B cell (primary cell): ENCODE measurements at regions of chr12 and their contacts with region 1.

Region 1: GRCh38 chr12:119667577-119668323 is at the start of gene PRKAB1:
- DNase-seq: peak; percentile 99
- ATAC-seq: peak; percentile 94
- H3K4me3 ChIP-seq: peak within 1 kb of the TSS; percentile 80 to 95 (median 89)
- H3K4me3 Mint-ChIP-seq: peak within 1 kb of the TSS; percentile 87
- H3K27ac ChIP-seq: peak within 1 kb of the TSS; percentile 80 to 92
- H3K27ac Mint-ChIP-seq: peak within 1 kb of the TSS; percentile 92
- H3K4me1 ChIP-seq: peaks cover 28 to 36% of the 10 kb centered on the region in 2 donors
- H3K4me1 Mint-ChIP-seq: peaks cover 51% of the 10 kb centered on the region
- H3K27me3 ChIP-seq: no peaks in the 10 kb centered on the region
- H3K27me3 Mint-ChIP-seq: no peaks in the 10 kb centered on the region
- CTCF ChIP-seq: peak; percentile 95
- total RNA-seq, gene PRKAB1: 56.4 and 59.6 TPM in 2 replicates

Region 2: GRCh38 chr12:118016424-118017264 is 1651.1 kb before region 1 on chr12 and contains the start of gene RFC5:
- CTCF ChIA-PET with region 1: no interaction called
- POLR2A ChIA-PET with region 1: no interaction called
- intact Hi-C with region 1: loop called (anchors 2 kb)
- DNase-seq: peak; percentile 98
- ATAC-seq: peak; percentile 98
- H3K4me3 ChIP-seq: peak within 1 kb of the TSS; percentile 51 to 92 (median 81)
- H3K4me3 Mint-ChIP-seq: peak within 1 kb of the TSS; percentile 91
- H3K27ac ChIP-seq: peak within 1 kb of the TSS in 1 of 2 donors; percentile 71
- H3K27ac Mint-ChIP-seq: peak within 1 kb of the TSS; percentile 95
- H3K4me1 ChIP-seq: peaks cover 11 to 16% of the 10 kb centered on the region in 2 donors
- H3K4me1 Mint-ChIP-seq: peaks cover 16% of the 10 kb centered on the region
- H3K27me3 ChIP-seq: no peaks in the 10 kb centered on the region
- H3K27me3 Mint-ChIP-seq: no peaks in the 10 kb centered on the region
- CTCF ChIP-seq: no peak
- total RNA-seq, gene RFC5: 15.0 and 22.7 TPM in 2 replicates

Region 3: GRCh38 chr12:118135788-118136558 is 1531.8 kb before region 1 on chr12 and contains the start of gene PEBP1:
- CTCF ChIA-PET with region 1: no interaction called
- POLR2A ChIA-PET with region 1: no interaction called
- intact Hi-C with region 1: loop called (anchors 5 kb)
- DNase-seq: peak; percentile 91
- ATAC-seq: peak; percentile 100
- H3K4me3 ChIP-seq: peak within 1 kb of the TSS; percentile 66 to 91 (median 73)
- H3K4me3 Mint-ChIP-seq: peak within 1 kb of the TSS; percentile 99
- H3K27ac ChIP-seq: peak within 1 kb of the TSS; percentile 26 to 77
- H3K27ac Mint-ChIP-seq: peak within 1 kb of the TSS; percentile 92
- H3K4me1 ChIP-seq: peaks cover 6 to 19% of the 10 kb centered on the region in 2 donors
- H3K4me1 Mint-ChIP-seq: peaks cover 28% of the 10 kb centered on the region
- H3K27me3 ChIP-seq: no peaks in the 10 kb centered on the region
- H3K27me3 Mint-ChIP-seq: no peaks in the 10 kb centered on the region
- CTCF ChIP-seq: no peak
- total RNA-seq, gene PEBP1: 94.0 and 106 TPM in 2 replicates

Region 4: DNA sequence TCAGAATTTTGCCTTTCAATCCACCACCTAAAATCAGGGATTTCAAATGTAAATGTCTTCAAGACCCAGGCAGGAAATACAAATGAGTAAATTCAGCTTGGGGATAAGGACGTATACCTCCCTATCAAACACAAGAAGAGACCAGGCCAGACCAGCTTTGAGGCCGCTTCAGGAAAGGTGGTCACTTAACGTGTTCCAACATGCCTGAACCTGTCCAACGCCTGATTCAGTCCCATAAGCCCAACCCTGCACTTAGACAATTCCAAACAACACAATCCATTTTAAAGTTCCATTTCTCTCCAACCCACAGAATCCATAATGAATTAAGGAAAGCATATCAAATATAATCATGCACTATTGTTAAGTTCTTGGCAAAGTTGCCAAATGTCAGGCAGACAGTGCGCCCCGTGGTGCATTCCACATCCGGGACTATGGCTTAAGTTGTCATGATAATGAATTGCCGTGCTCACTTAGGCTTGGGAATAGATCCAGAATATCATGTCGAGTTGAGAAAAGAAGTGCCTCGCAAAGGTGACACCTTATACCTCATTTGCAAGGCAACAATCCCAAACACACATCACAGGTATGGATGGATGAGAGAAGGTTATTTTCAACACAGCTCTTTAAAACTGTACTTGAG is 297.7 kb before region 1 on chr12:
- CTCF ChIA-PET with region 1: no interaction called
- POLR2A ChIA-PET with region 1: interaction called, 20 read pairs
- intact Hi-C with region 1: no loop called
- DNase-seq: no peak
- ATAC-seq: no peak
- H3K4me3 ChIP-seq: no peak overlapping the region
- H3K4me3 Mint-ChIP-seq: no peak overlapping the region
- H3K27ac ChIP-seq: no peak overlapping the region
- H3K27ac Mint-ChIP-seq: no peak overlapping the region
- H3K4me1 ChIP-seq: no peaks in the 10 kb centered on the region
- H3K4me1 Mint-ChIP-seq: peaks cover 3% of the 10 kb centered on the region
- H3K27me3 ChIP-seq: peaks cover 0 to 5% (median 0%) of the 10 kb centered on the region in 4 experiments
- H3K27me3 Mint-ChIP-seq: peaks cover 12% of the 10 kb centered on the region
- CTCF ChIP-seq: no peak

Region 5: DNA sequence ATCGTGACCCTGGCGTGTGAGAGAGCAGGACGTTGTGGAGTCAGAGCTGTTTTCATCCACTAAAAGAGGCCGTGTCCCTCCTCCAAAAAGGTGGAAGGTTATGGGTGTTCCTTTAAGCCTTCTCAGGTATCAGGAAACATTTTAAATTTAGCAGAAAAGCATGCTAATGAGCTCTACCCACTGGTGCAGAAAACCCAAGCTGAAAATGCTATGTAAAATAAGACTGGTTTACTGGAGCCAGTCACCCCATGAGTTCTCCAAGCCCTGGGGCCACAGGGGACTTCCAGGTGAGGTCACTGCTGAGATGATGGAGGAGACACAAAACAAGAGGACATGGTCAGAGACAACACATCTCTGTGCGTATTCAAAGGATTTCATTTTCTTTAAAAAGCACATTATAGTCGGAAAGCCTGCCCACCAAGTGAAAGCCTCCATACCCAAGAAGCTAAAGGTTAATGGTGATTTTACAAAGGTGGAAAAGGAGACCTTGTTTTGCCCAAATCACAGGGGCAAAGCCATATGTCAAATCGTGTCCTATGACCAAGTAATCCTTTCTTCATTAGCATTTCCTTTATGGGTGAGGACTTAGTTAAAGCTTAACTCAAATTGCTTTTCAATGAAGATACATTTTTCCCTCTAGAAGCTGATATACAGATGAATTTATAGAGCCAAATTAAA is 14.3 kb after region 1 on chr12:
- CTCF ChIA-PET with region 1: interaction called, 22 read pairs
- POLR2A ChIA-PET with region 1: interaction called, 6 read pairs
- intact Hi-C with region 1: loop called (anchors 1 kb)
- DNase-seq: peak; percentile 56
- ATAC-seq: peak; percentile 60
- H3K4me3 ChIP-seq: peak overlapping the region in 3 of 5 experiments; percentile 19 to 43 (median 42)
- H3K4me3 Mint-ChIP-seq: peak overlapping the region; percentile 80
- H3K27ac ChIP-seq: peak overlapping the region; percentile 85 to 94
- H3K27ac Mint-ChIP-seq: peak overlapping the region; percentile 95
- H3K4me1 ChIP-seq: peaks cover 19 to 29% of the 10 kb centered on the region in 2 donors
- H3K4me1 Mint-ChIP-seq: peaks cover 39% of the 10 kb centered on the region
- H3K27me3 ChIP-seq: no peaks in the 10 kb centered on the region
- H3K27me3 Mint-ChIP-seq: no peaks in the 10 kb centered on the region
- CTCF ChIP-seq: no peak

Region 6: GRCh38 chr12:119808441-119808840 is 140.7 kb after region 1 on chr12:
- CTCF ChIA-PET with region 1: no interaction called
- POLR2A ChIA-PET with region 1: no interaction called
- intact Hi-C with region 1: no loop called
- DNase-seq: no peak
- ATAC-seq: no peak
- H3K4me3 ChIP-seq: no peak overlapping the region
- H3K4me3 Mint-ChIP-seq: no peak overlapping the region
- H3K27ac ChIP-seq: no peak overlapping the region
- H3K27ac Mint-ChIP-seq: no peak overlapping the region
- H3K4me1 ChIP-seq: no peaks in the 10 kb centered on the region
- H3K4me1 Mint-ChIP-seq: peaks cover 3% of the 10 kb centered on the region
- H3K27me3 ChIP-seq: no peaks in the 10 kb centered on the region
- H3K27me3 Mint-ChIP-seq: no peaks in the 10 kb centered on the region
- CTCF ChIP-seq: no peak

Region 7: GRCh38 chr12:119876761-119877638 is 209.2 kb after region 1 on chr12 and contains the start of gene CIT:
- CTCF ChIA-PET with region 1: no interaction called
- POLR2A ChIA-PET with region 1: no interaction called
- intact Hi-C with region 1: loop called (anchors 1 kb)
- DNase-seq: peak; percentile 87
- ATAC-seq: peak; percentile 99
- H3K4me3 ChIP-seq: peak within 1 kb of the TSS; percentile 47 to 90 (median 87)
- H3K4me3 Mint-ChIP-seq: peak within 1 kb of the TSS; percentile 84
- H3K27ac ChIP-seq: peak within 1 kb of the TSS in 1 of 2 donors; percentile 54
- H3K27ac Mint-ChIP-seq: peak within 1 kb of the TSS; percentile 28
- H3K4me1 ChIP-seq: peaks cover 0 to 11% of the 10 kb centered on the region in 2 donors
- H3K4me1 Mint-ChIP-seq: peaks cover 13% of the 10 kb centered on the region
- H3K27me3 ChIP-seq: no peaks in the 10 kb centered on the region
- H3K27me3 Mint-ChIP-seq: peaks cover 9% of the 10 kb centered on the region
- CTCF ChIP-seq: no peak
- total RNA-seq, gene CIT: 6.1 and 6.2 TPM in 2 replicates

Region 8: GRCh38 chr12:119988782-119989668 is 321.3 kb after region 1 on chr12 and contains the start of gene BICDL1:
- CTCF ChIA-PET with region 1: no interaction called
- POLR2A ChIA-PET with region 1: no interaction called
- intact Hi-C with region 1: loop called (anchors 5 kb)
- DNase-seq: peak; percentile 98
- ATAC-seq: peak; percentile 82
- H3K4me3 ChIP-seq: peak within 1 kb of the TSS in 4 of 5 experiments; percentile 47 to 69 (median 59)
- H3K4me3 Mint-ChIP-seq: peak within 1 kb of the TSS; percentile 88
- H3K27ac ChIP-seq: peak within 1 kb of the TSS; percentile 41 to 67
- H3K27ac Mint-ChIP-seq: peak within 1 kb of the TSS; percentile 89
- H3K4me1 ChIP-seq: peaks cover 13 to 16% of the 10 kb centered on the region in 2 donors
- H3K4me1 Mint-ChIP-seq: peaks cover 24% of the 10 kb centered on the region
- H3K27me3 ChIP-seq: peaks cover 0 to 6% (median 0%) of the 10 kb centered on the region in 4 experiments
- H3K27me3 Mint-ChIP-seq: peaks cover 5% of the 10 kb centered on the region
- CTCF ChIP-seq: no peak
- total RNA-seq, gene BICDL1: 41.5 and 43.6 TPM in 2 replicates